ENCODE measurements at regions of chr13 and their contacts with region 1.

Region 1: GRCh38 chr13:110561344-110562035 is at the start of gene RAB20:
- DNase-seq: peak; percentile 73 to 78
- H3K4me3 ChIP-seq: peak within 1 kb of the TSS; percentile 91
- H3K27ac ChIP-seq: peak within 1 kb of the TSS; percentile 72
- H3K4me1 ChIP-seq: peaks cover 58% of the 10 kb centered on the region
- H3K27me3 ChIP-seq: no peaks in the 10 kb centered on the region
- CTCF ChIP-seq: no peak
- total RNA-seq, gene RAB20: 31.9 and 41.0 TPM in 2 replicates

Region 2: GRCh38 chr13:110506859-110507566 is 54.5 kb before region 1 on chr13:
- CTCF ChIA-PET with region 1: no interaction called
- POLR2A ChIA-PET with region 1: interaction called, 4 read pairs
- intact Hi-C with region 1: loop called (anchors 2 kb)
- DNase-seq: peak; percentile 77 to 93
- H3K4me3 ChIP-seq: peak overlapping the region; percentile 36; the same call in 1 of the 2 replicates
- H3K27ac ChIP-seq: peak overlapping the region; percentile 84
- H3K4me1 ChIP-seq: peaks cover 27% of the 10 kb centered on the region
- H3K27me3 ChIP-seq: no peaks in the 10 kb centered on the region
- CTCF ChIP-seq: no peak

Region 3: DNA sequence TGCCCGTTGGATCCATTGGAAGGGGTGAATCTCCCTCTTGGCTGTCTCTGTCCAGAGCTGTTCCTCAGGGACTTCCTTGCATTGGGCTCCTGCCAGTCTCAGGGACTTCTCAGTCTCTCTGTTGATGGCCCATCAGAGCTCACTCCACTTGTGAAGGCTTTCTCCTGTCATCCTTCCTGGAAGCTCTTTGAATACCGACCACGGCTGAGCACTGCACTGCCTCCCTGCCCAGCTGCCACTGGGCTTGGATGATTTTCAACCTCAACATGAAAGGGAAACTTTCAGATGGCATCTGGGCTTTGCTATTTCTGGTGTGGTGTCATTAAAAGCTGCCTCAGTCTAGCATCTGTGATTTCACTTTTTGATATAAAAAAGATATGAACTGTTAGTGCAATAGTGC is 419.4 kb after region 1 on chr13:
- CTCF ChIA-PET with region 1: no interaction called
- POLR2A ChIA-PET with region 1: no interaction called
- intact Hi-C with region 1: no loop called
- DNase-seq: no peak
- H3K4me3 ChIP-seq: no peak overlapping the region
- H3K27ac ChIP-seq: no peak overlapping the region
- H3K4me1 ChIP-seq: peaks cover 15% of the 10 kb centered on the region
- H3K27me3 ChIP-seq: no peaks in the 10 kb centered on the region
- CTCF ChIP-seq: no peak